ENCODE measurements at regions of chr3 and their contacts with region 1.

Region 1: GRCh38 chr3:6189384-6189783 is 671.5 kb upstream of the GRM7 start:
- DNase-seq: no peak
- ATAC-seq: no peak
- H3K4me3 ChIP-seq: no peak overlapping the region
- H3K4me3 Mint-ChIP-seq: no peak overlapping the region
- H3K27ac ChIP-seq: no peak overlapping the region
- H3K27ac Mint-ChIP-seq: no peak overlapping the region
- H3K4me1 ChIP-seq: no peaks in the 10 kb centered on the region
- H3K4me1 Mint-ChIP-seq: no peaks in the 10 kb centered on the region
- H3K27me3 ChIP-seq: no peaks in the 10 kb centered on the region
- H3K27me3 Mint-ChIP-seq: no peaks in the 10 kb centered on the region
- CTCF ChIP-seq: no peak

Region 2: DNA sequence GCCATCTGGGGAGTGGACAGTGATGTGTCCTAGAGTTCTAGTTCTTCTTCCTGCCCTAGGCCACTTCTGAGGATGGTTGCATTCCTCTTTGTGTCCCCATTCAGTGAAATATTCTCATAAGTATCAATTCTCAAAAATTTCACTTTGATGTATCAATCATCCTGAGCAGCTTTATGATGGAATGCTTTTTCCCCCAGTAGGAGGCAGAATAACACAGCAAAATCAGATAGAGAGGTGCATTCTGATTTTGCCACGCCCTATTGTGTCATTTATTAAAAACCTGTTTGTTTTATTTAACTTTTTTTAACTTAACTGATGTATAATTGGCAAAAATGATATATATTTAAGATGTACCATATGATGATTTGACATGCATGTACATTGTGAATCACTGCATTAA is 15.5 kb after region 1 on chr3:
- CTCF ChIA-PET with region 1: no interaction called
- POLR2A ChIA-PET with region 1: no interaction called
- intact Hi-C with region 1: loop called in 1 of 2 experiments (anchors 1 kb)
- DNase-seq: no peak
- ATAC-seq: no peak
- H3K4me3 ChIP-seq: no peak overlapping the region
- H3K4me3 Mint-ChIP-seq: no peak overlapping the region
- H3K27ac ChIP-seq: no peak overlapping the region
- H3K27ac Mint-ChIP-seq: no peak overlapping the region
- H3K4me1 ChIP-seq: no peaks in the 10 kb centered on the region
- H3K4me1 Mint-ChIP-seq: no peaks in the 10 kb centered on the region
- H3K27me3 ChIP-seq: no peaks in the 10 kb centered on the region
- H3K27me3 Mint-ChIP-seq: no peaks in the 10 kb centered on the region
- CTCF ChIP-seq: no peak